Activated CD4-positive, alpha-beta memory T cell treated with anti-CD3 and anti-CD28 coated beads for 36 hours (primary cell): ENCODE measurements at regions of chr1 and their contacts with region 1.

Region 1: DNA sequence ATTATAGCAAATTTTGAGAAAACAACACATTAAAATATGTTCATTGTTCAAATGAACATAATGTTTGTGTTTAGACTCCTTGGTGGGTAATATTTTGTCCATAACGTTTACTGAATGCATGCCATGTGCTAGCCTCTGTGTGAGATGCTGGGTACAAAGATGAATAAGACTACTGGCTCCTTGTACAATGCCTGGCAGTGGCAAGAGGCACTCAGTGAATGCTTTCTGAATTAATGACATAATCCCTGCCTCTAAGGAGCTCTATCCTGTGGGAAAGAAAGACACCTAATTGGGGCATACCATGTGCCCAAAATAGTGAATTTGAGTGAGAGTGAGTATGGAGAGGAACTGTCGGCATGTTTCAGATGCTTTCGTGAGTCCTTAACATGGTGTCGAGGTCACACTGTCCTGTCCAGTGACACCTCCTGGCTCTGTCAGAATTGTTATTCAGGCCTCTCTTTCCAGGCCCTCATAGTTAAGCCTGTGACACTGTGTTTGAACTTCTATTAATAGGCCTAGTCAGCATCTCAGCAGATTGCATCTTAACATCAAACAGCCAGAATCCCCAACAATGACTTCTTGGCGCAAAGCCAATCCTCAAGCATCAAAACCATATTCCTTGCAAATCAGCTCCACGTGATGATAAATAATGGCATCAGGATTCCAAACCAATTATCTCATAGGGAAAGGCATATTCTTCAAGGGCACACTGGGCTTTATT is 32.8 kb upstream of the S1PR1 start:
- DNase-seq: no peak
- H3K4me3 Mint-ChIP-seq: no peak overlapping the region
- H3K27ac Mint-ChIP-seq: no peak overlapping the region
- H3K4me1 Mint-ChIP-seq: peaks cover 37% of the 10 kb centered on the region
- H3K27me3 Mint-ChIP-seq: no peaks in the 10 kb centered on the region

Region 2: DNA sequence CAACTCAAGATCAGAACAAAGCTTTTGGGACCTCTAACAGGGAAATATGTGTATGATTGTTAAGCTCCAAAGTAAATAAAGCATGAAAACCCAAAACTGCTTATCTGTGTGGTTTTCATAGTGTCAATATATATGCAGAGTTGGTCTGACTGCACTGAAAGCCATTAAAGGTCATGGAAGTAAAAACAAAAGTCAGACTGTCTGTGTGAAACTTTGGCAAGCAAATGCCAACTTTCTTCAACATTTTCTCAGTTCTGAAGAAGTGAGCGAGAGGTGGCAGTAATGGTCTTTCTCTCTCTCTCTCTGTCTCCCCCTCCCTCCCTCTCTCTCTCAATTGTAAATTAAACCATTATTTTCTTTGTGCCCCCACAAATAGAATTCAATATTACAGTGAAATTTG is 67.2 kb before region 1 on chr1:
- CTCF ChIA-PET with region 1: interaction called, 7 read pairs
- POLR2A ChIA-PET with region 1: interaction called, 3 read pairs
- intact Hi-C with region 1: loop called (anchors 1 kb)
- DNase-seq: peak; percentile 31
- H3K4me3 Mint-ChIP-seq: peak overlapping the region; percentile 14
- H3K27ac Mint-ChIP-seq: peak overlapping the region; percentile 79
- H3K4me1 Mint-ChIP-seq: peaks cover 60% of the 10 kb centered on the region
- H3K27me3 Mint-ChIP-seq: no peaks in the 10 kb centered on the region

Region 3: DNA sequence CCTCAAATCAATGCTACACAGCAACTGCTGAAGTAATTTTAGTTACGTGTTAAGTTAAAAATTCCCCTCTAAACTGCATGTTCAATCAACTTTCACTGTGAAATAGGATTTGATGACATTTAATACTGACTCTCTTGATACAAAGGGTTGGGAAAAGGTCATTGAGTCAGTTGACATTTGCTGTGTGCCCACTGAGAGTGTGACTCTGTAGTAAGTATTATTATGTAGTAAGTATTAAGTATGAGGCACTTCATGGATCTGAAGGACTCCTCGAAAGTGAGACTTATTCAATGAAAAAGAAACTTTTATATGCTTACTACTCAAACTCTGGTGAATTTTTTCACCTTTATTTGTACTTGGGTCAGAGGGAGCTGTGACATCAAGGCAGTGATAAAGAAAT is 50.3 kb before region 1 on chr1:
- CTCF ChIA-PET with region 1: no interaction called
- POLR2A ChIA-PET with region 1: no interaction called
- intact Hi-C with region 1: loop called (anchors 1 kb)
- DNase-seq: no peak
- H3K4me3 Mint-ChIP-seq: no peak overlapping the region
- H3K27ac Mint-ChIP-seq: peak overlapping the region; percentile 21
- H3K4me1 Mint-ChIP-seq: peaks cover 28% of the 10 kb centered on the region
- H3K27me3 Mint-ChIP-seq: no peaks in the 10 kb centered on the region

Region 4: DNA sequence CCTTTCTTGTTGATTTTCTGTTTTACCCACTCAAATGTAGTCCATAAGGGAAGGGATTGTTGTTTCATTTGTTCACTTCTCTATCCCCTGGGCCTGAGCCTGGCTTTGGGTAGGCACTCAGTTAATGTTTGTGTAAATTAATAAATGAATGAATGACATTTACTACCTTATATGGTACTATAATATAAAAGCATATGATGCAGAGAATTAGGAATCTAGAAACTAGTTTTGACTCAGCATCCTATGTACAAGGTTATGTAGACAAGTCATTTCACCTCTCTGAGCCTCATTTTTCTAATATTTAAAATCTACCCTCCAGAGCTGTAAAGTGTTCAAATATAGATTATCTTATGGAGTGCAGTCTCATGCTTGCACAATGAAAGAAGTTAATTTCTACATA is 36.1 kb before region 1 on chr1:
- CTCF ChIA-PET with region 1: interaction called, 3 read pairs
- POLR2A ChIA-PET with region 1: no interaction called
- intact Hi-C with region 1: loop called (anchors 1 kb)
- DNase-seq: no peak
- H3K4me3 Mint-ChIP-seq: no peak overlapping the region
- H3K27ac Mint-ChIP-seq: peak overlapping the region; percentile 61
- H3K4me1 Mint-ChIP-seq: peaks cover 40% of the 10 kb centered on the region
- H3K27me3 Mint-ChIP-seq: no peaks in the 10 kb centered on the region

Region 5: GRCh38 chr1:101216623-101217022 is 12.6 kb after region 1 on chr1:
- CTCF ChIA-PET with region 1: interaction called, 4 read pairs
- POLR2A ChIA-PET with region 1: interaction called, 5 read pairs
- intact Hi-C with region 1: loop called (anchors 1 kb)
- DNase-seq: no peak
- H3K4me3 Mint-ChIP-seq: no peak overlapping the region
- H3K27ac Mint-ChIP-seq: no peak overlapping the region
- H3K4me1 Mint-ChIP-seq: peaks cover 29% of the 10 kb centered on the region
- H3K27me3 Mint-ChIP-seq: no peaks in the 10 kb centered on the region

Region 6: GRCh38 chr1:101221945-101222429 is 18.0 kb after region 1 on chr1:
- CTCF ChIA-PET with region 1: interaction called, 4 read pairs
- POLR2A ChIA-PET with region 1: interaction called, 3 read pairs
- intact Hi-C with region 1: loop called (anchors 2 kb)
- DNase-seq: no peak
- H3K4me3 Mint-ChIP-seq: peak overlapping the region; percentile 56
- H3K27ac Mint-ChIP-seq: peak overlapping the region; percentile 67
- H3K4me1 Mint-ChIP-seq: peaks cover 37% of the 10 kb centered on the region
- H3K27me3 Mint-ChIP-seq: no peaks in the 10 kb centered on the region